Activated B cell treated with CpG ODN at 0.5 μM for 24 hours (primary cell): ENCODE measurements at regions of chr13 and their contacts with region 1.

Region 1: GRCh38 chr13:99436686-99437416 is 64.4 kb upstream of the TM9SF2 start:
- DNase-seq: peak; percentile 87
- ATAC-seq: peak; percentile 59
- H3K4me3 Mint-ChIP-seq: peak overlapping the region; percentile 66
- H3K27ac Mint-ChIP-seq: peak overlapping the region; percentile 76
- H3K4me1 Mint-ChIP-seq: peaks cover 66% of the 10 kb centered on the region
- H3K27me3 Mint-ChIP-seq: peaks cover 2% of the 10 kb centered on the region
- CTCF ChIP-seq: peak; percentile 99

Region 2: DNA sequence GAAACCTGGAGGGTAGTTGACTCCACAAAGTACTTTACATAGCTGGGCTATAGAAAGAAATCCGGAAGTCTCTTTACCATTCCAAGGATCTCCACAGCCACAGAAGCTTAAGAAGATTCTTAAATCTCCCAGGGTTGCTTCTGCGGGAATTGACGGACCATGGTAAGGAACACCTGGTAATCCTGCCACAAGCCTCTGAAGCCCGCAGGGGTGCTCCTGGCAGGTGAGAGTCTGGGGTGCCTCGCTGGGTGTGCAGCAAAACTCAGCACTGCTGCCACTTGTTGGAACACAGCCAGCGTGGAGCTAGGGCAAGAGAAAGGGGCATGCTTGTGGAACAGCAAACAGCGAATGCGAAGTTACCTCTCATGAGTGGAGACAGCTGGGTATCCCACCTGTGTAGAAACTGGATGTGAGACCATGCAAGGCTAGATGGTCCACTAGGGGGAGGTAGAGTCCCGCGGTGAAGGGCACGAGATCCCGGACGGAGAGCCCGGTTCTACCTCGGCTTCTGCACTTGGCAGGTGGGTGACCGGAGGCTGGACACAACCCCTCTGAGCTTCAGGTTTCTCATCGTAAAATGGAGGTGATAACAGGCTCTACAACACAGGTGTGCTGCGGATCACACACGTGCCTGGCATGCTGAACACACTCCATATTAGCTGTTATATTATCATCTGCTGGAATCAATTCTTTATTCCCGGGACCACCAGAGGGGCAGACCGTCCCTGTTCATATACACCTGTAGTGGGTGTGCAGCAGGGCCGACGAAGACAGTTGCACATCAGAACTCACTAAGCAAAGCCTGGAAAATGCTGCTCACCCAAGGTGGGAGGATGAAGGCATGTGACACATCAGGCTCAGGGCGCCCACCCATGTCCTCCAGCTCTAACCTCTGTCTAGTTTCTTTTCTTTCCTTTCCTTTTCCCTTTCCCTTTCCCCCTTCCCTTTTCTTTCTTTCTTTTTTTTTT is 260.3 kb before region 1 on chr13:
- CTCF ChIA-PET with region 1: interaction called, 28 read pairs
- POLR2A ChIA-PET with region 1: interaction called, 6 read pairs
- intact Hi-C with region 1: loop called (anchors 1 kb)
- DNase-seq: peak; percentile 64
- ATAC-seq: peak; percentile 90
- H3K4me3 Mint-ChIP-seq: peak overlapping the region; percentile 58
- H3K27ac Mint-ChIP-seq: peak overlapping the region; percentile 24
- H3K4me1 Mint-ChIP-seq: peaks cover 43% of the 10 kb centered on the region
- H3K27me3 Mint-ChIP-seq: peaks cover 2% of the 10 kb centered on the region
- CTCF ChIP-seq: no peak

Region 3: DNA sequence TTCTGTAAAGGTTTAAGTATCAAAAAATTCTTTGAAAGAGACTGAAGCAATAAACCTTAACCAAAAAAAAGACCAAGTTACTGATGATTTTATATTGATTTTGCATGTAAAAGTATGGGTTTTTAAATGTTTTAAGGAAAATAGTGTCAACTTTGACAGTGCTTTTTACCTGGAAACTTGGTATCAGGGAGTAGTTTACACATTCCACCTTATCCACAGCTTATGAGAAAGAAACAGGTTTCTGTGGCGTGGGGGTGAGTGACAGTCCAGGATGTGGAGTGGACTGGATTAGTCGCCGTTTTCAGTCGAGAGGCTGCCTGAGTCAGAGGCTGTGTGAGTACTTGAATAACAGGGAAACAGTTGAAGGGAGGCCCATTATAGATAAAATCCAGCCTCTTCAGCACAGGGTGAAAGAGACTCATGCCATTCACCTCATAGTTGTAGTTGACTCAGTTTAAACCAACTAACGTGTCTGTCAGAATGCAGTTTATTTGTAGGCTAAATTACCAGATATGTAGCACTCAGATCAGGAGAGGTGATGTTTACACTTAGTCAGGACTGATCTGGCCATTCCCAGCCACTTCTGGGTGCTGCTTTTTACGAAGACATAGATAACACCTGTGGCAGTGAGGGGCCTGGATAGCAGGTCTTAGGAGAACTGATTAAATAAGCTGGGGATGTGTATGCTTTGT is 129.1 kb before region 1 on chr13:
- CTCF ChIA-PET with region 1: interaction called, 9 read pairs
- POLR2A ChIA-PET with region 1: interaction called, 3 read pairs
- intact Hi-C with region 1: loop called (anchors 1 kb)
- DNase-seq: no peak
- ATAC-seq: peak; percentile 57
- H3K4me3 Mint-ChIP-seq: peak overlapping the region; percentile 95
- H3K27ac Mint-ChIP-seq: peak overlapping the region; percentile 92
- H3K4me1 Mint-ChIP-seq: peaks cover 82% of the 10 kb centered on the region
- H3K27me3 Mint-ChIP-seq: no peaks in the 10 kb centered on the region
- CTCF ChIP-seq: no peak

Region 4: DNA sequence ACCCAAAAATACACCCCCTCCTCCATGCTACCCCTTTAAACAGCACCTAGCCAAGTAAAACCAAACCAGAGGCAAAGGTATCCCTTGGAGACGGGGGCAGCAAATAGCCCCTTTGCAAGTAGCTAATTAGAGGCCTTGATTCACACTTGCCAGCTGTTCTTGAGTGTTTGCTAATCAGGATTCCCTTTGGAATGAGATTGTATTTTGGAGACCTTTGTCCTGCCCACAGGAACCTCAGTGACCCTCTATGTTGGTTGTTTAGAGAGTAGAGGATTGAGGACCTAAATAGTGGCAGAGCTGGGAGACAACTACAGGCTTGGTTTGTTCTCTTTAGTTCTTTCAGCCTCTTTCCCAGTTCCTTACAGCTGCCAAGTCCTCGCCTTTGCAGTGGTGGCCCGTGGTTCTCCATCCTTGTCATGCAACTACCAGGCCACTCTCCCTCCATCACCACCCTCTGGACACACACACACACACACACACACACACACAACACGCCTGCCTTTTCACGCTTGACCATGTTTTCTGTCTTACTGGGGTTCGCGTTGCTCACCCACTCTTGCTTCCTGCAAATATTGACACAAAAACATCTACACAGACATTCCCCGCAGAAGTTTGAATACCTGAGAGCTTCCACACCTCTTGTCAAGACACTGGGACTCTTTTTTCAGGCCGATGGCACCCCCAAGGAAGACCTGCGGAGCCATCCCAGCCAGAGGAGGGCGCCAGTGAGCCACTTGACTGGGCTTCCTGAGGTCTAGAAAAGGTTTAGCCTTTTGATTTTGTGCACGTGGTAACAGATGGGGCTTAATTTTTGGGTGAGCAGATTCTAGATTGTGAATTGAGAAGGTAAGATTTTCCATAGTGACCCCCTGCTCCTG is 49.7 kb before region 1 on chr13:
- CTCF ChIA-PET with region 1: interaction called, 203 read pairs
- POLR2A ChIA-PET with region 1: interaction called, 6 read pairs
- intact Hi-C with region 1: loop called (anchors 1 kb)
- DNase-seq: peak; percentile 81
- ATAC-seq: peak; percentile 78
- H3K4me3 Mint-ChIP-seq: peak overlapping the region; percentile 12
- H3K27ac Mint-ChIP-seq: peak overlapping the region; percentile 84
- H3K4me1 Mint-ChIP-seq: peaks cover 43% of the 10 kb centered on the region
- H3K27me3 Mint-ChIP-seq: no peaks in the 10 kb centered on the region
- CTCF ChIP-seq: peak; percentile 94

Region 5: DNA sequence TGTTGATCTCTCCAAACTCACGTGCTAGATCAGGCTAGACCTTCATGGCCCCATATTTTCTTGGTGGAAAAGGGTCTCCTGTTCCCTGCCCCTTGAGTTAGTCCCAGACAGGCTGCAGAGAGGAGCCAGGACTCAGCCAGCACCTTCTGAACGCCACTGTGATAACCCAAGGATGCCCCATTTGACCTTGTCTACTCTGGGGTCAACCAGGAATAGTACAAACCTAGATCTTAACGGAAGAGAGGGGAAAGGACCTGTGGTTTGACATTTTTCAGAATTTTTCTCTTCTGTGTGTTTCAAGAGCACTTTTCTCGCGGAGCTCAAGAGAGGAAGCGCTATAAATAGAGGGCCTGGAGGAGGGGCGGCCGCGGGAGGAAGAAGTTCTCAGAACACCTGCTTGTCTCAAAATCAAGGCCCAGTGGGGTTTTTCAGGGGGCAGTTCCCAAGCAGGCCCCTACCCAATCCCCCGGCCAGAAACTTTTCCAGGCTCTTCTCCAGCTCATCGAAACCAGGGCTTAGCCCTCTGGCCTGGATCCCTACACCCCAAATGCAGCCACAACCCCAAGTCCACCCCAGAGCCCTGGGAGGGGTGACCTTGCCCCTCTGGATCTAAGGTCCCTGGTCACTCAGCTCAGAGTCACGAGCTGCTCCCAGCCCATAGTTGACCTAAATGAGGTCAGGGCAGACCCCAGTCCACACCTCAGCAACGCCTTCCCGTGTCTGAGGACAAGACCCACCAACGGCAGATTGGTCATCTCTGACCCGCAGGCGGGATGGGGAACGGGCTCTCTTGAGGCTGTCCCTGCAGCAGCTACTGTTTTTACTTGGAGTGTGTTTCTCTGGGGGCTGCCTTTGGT is 11.1 kb before region 1 on chr13:
- CTCF ChIA-PET with region 1: interaction called, 27 read pairs
- POLR2A ChIA-PET with region 1: interaction called, 43 read pairs
- intact Hi-C with region 1: loop called (anchors 1 kb)
- DNase-seq: peak; percentile 56
- ATAC-seq: peak; percentile 53
- H3K4me3 Mint-ChIP-seq: peak overlapping the region; percentile 71
- H3K27ac Mint-ChIP-seq: peak overlapping the region; percentile 93
- H3K4me1 Mint-ChIP-seq: peaks cover 89% of the 10 kb centered on the region
- H3K27me3 Mint-ChIP-seq: no peaks in the 10 kb centered on the region
- CTCF ChIP-seq: no peak

Region 6: GRCh38 chr13:100506154-100506553 is 1069.3 kb after region 1 on chr13:
- CTCF ChIA-PET with region 1: no interaction called
- POLR2A ChIA-PET with region 1: no interaction called
- intact Hi-C with region 1: no loop called
- DNase-seq: no peak
- ATAC-seq: no peak
- H3K4me3 Mint-ChIP-seq: peak overlapping the region; percentile 62
- H3K27ac Mint-ChIP-seq: no peak overlapping the region
- H3K4me1 Mint-ChIP-seq: peaks cover 11% of the 10 kb centered on the region
- H3K27me3 Mint-ChIP-seq: peaks cover 3% of the 10 kb centered on the region
- CTCF ChIP-seq: no peak